MCF 10A (cell line): ENCODE measurements at regions of chr16 and their contacts with region 1.

Region 1: GRCh38 chr16:77584205-77584859 is 138.0 kb upstream of the NUDT7 start:
- DNase-seq: peak; percentile 77
- H3K4me3 Mint-ChIP-seq: no peak overlapping the region
- H3K27ac Mint-ChIP-seq: no peak overlapping the region
- H3K4me1 Mint-ChIP-seq: peaks cover 11% of the 10 kb centered on the region
- H3K27me3 Mint-ChIP-seq: peaks cover 31% of the 10 kb centered on the region
- CTCF ChIP-seq: peak; percentile 87

Region 2: DNA sequence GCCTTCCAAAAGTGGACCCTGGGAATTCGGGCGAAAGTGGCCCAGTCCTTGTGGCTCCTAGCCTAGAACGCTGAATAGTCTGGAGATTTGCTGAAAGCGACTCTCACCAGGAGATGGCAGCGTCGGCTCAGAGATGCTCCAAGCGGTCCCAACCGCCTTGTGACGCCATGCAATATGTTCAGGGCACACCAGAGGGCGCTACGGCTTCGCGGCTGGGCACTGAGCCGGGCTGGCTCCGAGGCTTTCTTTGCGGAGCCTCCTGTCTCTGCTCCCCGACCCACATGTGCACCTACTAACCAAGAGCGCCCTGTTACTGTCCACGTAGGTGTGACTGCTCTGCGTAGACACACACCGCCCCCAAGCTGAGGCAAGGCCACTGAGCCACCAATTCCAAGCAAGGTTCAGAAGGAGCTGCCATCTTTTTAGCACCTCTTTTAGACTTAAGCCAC is 348.2 kb before region 1 on chr16:
- CTCF ChIA-PET with region 1: interaction called, 486 read pairs
- POLR2A ChIA-PET with region 1: interaction called, 8 read pairs
- intact Hi-C with region 1: loop called (anchors 1 kb)
- DNase-seq: peak; percentile 84
- H3K4me3 Mint-ChIP-seq: no peak overlapping the region
- H3K27ac Mint-ChIP-seq: no peak overlapping the region
- H3K4me1 Mint-ChIP-seq: peaks cover 8% of the 10 kb centered on the region
- H3K27me3 Mint-ChIP-seq: peaks cover 10% of the 10 kb centered on the region
- CTCF ChIP-seq: peak; percentile 100

Region 3: GRCh38 chr16:77289331-77289809 is 295.0 kb before region 1 on chr16:
- CTCF ChIA-PET with region 1: interaction called, 16 read pairs
- POLR2A ChIA-PET with region 1: no interaction called
- intact Hi-C with region 1: no loop called
- DNase-seq: peak; percentile 8
- H3K4me3 Mint-ChIP-seq: no peak overlapping the region
- H3K27ac Mint-ChIP-seq: peak overlapping the region; percentile 49
- H3K4me1 Mint-ChIP-seq: peaks cover 8% of the 10 kb centered on the region
- H3K27me3 Mint-ChIP-seq: no peaks in the 10 kb centered on the region
- CTCF ChIP-seq: no peak

Region 4: GRCh38 chr16:77437859-77438258 is 146.5 kb before region 1 on chr16:
- CTCF ChIA-PET with region 1: interaction called, 4 read pairs
- POLR2A ChIA-PET with region 1: no interaction called
- intact Hi-C with region 1: loop called (anchors 1 kb)
- DNase-seq: peak; percentile 22
- H3K4me3 Mint-ChIP-seq: no peak overlapping the region
- H3K27ac Mint-ChIP-seq: no peak overlapping the region
- H3K4me1 Mint-ChIP-seq: no peaks in the 10 kb centered on the region
- H3K27me3 Mint-ChIP-seq: peaks cover 81% of the 10 kb centered on the region
- CTCF ChIP-seq: peak; percentile 10

Region 5: GRCh38 chr16:77562497-77562896 is 21.8 kb before region 1 on chr16:
- CTCF ChIA-PET with region 1: interaction called, 75 read pairs
- POLR2A ChIA-PET with region 1: no interaction called
- intact Hi-C with region 1: no loop called
- DNase-seq: no peak
- H3K4me3 Mint-ChIP-seq: no peak overlapping the region
- H3K27ac Mint-ChIP-seq: no peak overlapping the region
- H3K4me1 Mint-ChIP-seq: no peaks in the 10 kb centered on the region
- H3K27me3 Mint-ChIP-seq: peaks cover 41% of the 10 kb centered on the region
- CTCF ChIP-seq: no peak

Region 6: GRCh38 chr16:77599793-77600415 is 15.6 kb after region 1 on chr16:
- CTCF ChIA-PET with region 1: interaction called, 26 read pairs
- POLR2A ChIA-PET with region 1: no interaction called
- intact Hi-C with region 1: no loop called
- DNase-seq: peak; percentile 60
- H3K4me3 Mint-ChIP-seq: no peak overlapping the region
- H3K27ac Mint-ChIP-seq: no peak overlapping the region
- H3K4me1 Mint-ChIP-seq: peaks cover 6% of the 10 kb centered on the region
- H3K27me3 Mint-ChIP-seq: peaks cover 30% of the 10 kb centered on the region
- CTCF ChIP-seq: peak; percentile 65

Region 7: GRCh38 chr16:78563905-78564304 is 979.6 kb after region 1 on chr16:
- CTCF ChIA-PET with region 1: no interaction called
- POLR2A ChIA-PET with region 1: no interaction called
- intact Hi-C with region 1: no loop called
- DNase-seq: peak; percentile 57
- H3K4me3 Mint-ChIP-seq: no peak overlapping the region
- H3K27ac Mint-ChIP-seq: peak overlapping the region; percentile 49
- H3K4me1 Mint-ChIP-seq: peaks cover 16% of the 10 kb centered on the region
- H3K27me3 Mint-ChIP-seq: no peaks in the 10 kb centered on the region
- CTCF ChIP-seq: no peak